MCF 10A (cell line): ENCODE measurements at regions of chr1 and their contacts with region 1.

Region 1: DNA sequence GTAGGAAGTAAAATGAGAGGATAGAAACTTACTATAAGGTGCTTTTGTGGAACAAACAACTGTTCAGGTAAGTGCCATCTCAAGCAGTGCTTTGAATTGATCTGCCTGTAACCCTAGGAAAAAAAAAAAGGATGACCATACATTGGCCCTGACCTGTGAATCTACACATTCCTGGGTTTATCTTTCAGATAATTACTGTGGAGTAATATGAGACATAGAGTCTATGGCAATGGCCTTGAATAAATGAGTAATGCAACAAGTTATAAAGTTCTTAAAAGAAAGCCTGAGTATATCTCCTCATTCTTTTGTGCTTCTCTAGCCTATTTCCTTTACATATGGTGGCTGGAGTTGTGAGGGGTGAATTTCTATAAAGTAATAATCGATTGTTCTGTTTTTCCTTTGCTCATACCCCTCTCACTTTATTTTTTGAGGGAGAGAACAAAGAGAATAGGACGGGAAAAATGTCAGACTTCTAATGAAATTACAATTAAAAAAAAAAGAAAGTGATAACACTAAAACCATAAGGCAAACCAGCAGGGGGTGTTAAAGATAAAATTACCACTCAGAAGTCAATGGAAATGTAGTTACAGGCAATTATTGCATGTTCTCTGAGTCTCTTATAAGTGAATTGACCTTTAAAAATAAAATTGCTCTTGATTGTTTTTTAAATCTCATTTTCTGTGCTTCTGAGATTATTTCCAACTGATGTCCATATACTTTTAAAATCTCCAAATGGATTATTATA is 12.4 kb upstream of the ATP1A1 start:
- DNase-seq: peak; percentile 48
- H3K4me3 Mint-ChIP-seq: no peak overlapping the region
- H3K27ac Mint-ChIP-seq: no peak overlapping the region
- H3K4me1 Mint-ChIP-seq: peaks cover 24% of the 10 kb centered on the region
- H3K27me3 Mint-ChIP-seq: no peaks in the 10 kb centered on the region
- CTCF ChIP-seq: peak; percentile 21

Region 2: DNA sequence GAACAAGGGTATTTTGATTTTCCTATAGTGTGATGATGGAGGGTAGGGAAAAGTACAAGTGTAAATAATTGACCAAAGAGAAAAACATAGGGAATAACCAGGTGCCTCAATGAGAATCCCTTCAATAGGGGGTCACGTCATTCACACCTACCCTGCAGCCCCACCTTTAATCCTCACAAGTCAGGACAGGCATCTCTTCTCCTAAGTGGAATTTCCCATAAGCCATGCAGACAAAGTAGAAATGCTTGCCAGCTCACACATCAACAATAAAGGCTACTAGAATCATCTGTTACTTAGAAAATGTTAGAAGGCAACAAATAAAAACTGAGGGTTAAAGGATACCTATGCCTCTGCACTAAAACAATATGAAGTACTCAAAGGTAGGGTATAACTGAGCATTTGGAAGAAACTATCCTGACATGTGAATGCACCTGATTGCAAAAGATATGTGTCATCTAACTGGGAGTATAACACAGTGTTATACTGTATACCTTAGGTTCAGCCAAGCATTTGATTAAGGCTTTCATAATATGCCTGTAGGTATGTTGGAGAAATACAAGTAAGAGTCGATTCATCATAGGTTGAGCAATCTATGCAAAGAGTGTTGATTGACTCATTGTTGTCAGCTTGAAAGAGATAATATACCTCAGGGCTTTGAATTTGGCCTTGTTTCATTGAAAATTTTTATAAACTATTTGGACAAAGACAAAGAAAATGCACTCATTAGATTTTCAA is 19.9 kb before region 1 on chr1:
- CTCF ChIA-PET with region 1: no interaction called
- POLR2A ChIA-PET with region 1: interaction called, 12 read pairs
- intact Hi-C with region 1: no loop called
- DNase-seq: peak; percentile 92
- H3K4me3 Mint-ChIP-seq: peak overlapping the region; percentile 16
- H3K27ac Mint-ChIP-seq: peak overlapping the region; percentile 63
- H3K4me1 Mint-ChIP-seq: peaks cover 19% of the 10 kb centered on the region
- H3K27me3 Mint-ChIP-seq: no peaks in the 10 kb centered on the region
- CTCF ChIP-seq: no peak

Region 3: DNA sequence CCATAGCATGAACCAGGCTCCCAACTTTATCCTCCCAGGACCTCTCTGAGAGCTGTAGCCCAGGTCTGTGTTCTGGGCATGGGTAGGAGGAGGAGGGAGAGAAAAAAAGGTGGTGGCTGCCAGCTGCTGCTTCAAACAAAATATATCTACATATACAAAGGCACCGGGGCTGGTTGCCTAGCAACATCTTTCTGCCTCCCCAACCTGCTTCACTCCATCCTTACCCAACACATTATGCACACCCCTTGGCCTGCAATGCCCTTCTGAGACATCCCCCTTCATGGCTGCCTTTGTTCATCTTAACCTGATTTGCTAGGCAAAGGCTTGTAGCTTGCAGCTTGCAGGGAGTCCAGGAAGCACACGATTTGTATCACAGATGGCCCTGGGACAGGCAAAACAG is 14.8 kb before region 1 on chr1:
- CTCF ChIA-PET with region 1: no interaction called
- POLR2A ChIA-PET with region 1: interaction called, 13 read pairs
- intact Hi-C with region 1: no loop called
- DNase-seq: no peak
- H3K4me3 Mint-ChIP-seq: no peak overlapping the region
- H3K27ac Mint-ChIP-seq: no peak overlapping the region
- H3K4me1 Mint-ChIP-seq: peaks cover 18% of the 10 kb centered on the region
- H3K27me3 Mint-ChIP-seq: no peaks in the 10 kb centered on the region
- CTCF ChIP-seq: no peak

Region 4: GRCh38 chr1:116418091-116418830 is 57.7 kb after region 1 on chr1:
- CTCF ChIA-PET with region 1: no interaction called
- POLR2A ChIA-PET with region 1: no interaction called
- intact Hi-C with region 1: no loop called
- DNase-seq: peak; percentile 70
- H3K4me3 Mint-ChIP-seq: peak overlapping the region; percentile 85
- H3K27ac Mint-ChIP-seq: peak overlapping the region; percentile 50
- H3K4me1 Mint-ChIP-seq: peaks cover 6% of the 10 kb centered on the region
- H3K27me3 Mint-ChIP-seq: no peaks in the 10 kb centered on the region
- CTCF ChIP-seq: no peak

Region 5: DNA sequence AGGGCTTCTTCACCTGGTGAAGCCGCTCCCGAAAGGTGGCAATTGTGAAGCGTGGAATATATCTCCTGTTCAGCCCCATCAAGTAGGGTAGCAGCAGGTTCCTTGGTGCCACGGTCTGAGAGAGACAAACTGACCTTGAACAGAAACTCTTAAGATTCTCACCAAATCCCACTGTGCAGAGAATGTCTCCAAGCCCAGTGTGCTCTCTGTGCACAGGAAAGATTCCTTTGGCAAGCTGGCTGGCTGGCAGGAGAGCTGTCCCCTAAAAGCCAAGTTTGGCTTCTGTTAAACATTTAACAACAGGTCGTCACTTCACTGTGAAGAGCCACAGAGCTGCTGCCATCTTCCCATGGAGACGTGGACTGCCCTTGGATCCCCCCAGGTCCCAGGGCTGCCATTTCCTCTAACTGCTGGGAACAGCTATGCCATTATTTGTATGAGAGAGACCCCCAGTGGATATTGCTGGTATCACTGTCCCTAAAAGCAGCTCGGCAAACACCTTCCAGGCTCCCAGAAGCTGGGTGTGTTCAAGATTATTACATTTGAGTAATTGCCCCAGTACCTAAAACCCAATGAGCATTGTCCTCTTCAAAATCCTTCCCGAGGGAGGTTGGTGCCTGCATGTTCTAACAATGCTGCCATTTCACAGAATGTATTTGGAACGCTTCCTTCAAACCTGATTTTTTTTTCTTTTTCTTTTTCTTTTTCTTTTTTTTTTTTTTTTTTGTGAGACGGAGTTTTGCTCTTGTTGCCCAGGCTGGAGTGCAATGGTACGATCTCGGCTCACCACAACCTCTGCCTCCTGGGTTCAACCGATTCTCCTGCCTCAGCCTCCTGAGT is 138.4 kb after region 1 on chr1:
- CTCF ChIA-PET with region 1: no interaction called
- POLR2A ChIA-PET with region 1: no interaction called
- intact Hi-C with region 1: loop called (anchors 1 kb)
- DNase-seq: peak; percentile 73
- H3K4me3 Mint-ChIP-seq: no peak overlapping the region
- H3K27ac Mint-ChIP-seq: no peak overlapping the region
- H3K4me1 Mint-ChIP-seq: peaks cover 17% of the 10 kb centered on the region
- H3K27me3 Mint-ChIP-seq: no peaks in the 10 kb centered on the region
- CTCF ChIP-seq: peak; percentile 86